ENCODE measurements at regions of chr3 and their contacts with region 1.

Region 1: GRCh38 chr3:128051837-128052594 is at the start of gene SEC61A1:
- DNase-seq: peak; percentile 95
- ATAC-seq: peak; percentile 95
- H3K4me3 ChIP-seq: peak within 1 kb of the TSS; percentile 82 to 97 (median 92)
- H3K4me3 Mint-ChIP-seq: peak within 1 kb of the TSS; percentile 95
- H3K27ac ChIP-seq: peak within 1 kb of the TSS; percentile 61 to 90
- H3K27ac Mint-ChIP-seq: peak within 1 kb of the TSS; percentile 92
- H3K4me1 ChIP-seq: peaks cover 31 to 32% of the 10 kb centered on the region in 2 donors
- H3K4me1 Mint-ChIP-seq: peaks cover 40% of the 10 kb centered on the region
- H3K27me3 ChIP-seq: no peaks in the 10 kb centered on the region
- H3K27me3 Mint-ChIP-seq: peaks cover 1% of the 10 kb centered on the region
- CTCF ChIP-seq: no peak
- total RNA-seq, gene SEC61A1: 68.9 and 79.4 TPM in 2 replicates

Region 2: GRCh38 chr3:126357295-126358037 is 1694.5 kb before region 1 on chr3 and contains the start of gene KLF15:
- CTCF ChIA-PET with region 1: no interaction called
- POLR2A ChIA-PET with region 1: no interaction called
- intact Hi-C with region 1: loop called (anchors 5 kb)
- DNase-seq: peak; percentile 85
- ATAC-seq: peak; percentile 93
- H3K4me3 ChIP-seq: peak within 1 kb of the TSS; percentile 12 to 84 (median 59)
- H3K4me3 Mint-ChIP-seq: peak within 1 kb of the TSS; percentile 95
- H3K27ac ChIP-seq: no peak within 1 kb of the TSS
- H3K27ac Mint-ChIP-seq: peak within 1 kb of the TSS; percentile 81
- H3K4me1 ChIP-seq: peaks cover 20 to 21% of the 10 kb centered on the region in 2 donors
- H3K4me1 Mint-ChIP-seq: peaks cover 16% of the 10 kb centered on the region
- H3K27me3 ChIP-seq: peaks cover 0 to 54% (median 22%) of the 10 kb centered on the region in 4 experiments
- H3K27me3 Mint-ChIP-seq: peaks cover 50% of the 10 kb centered on the region
- CTCF ChIP-seq: no peak
- total RNA-seq, gene KLF15: 0.83 and 2.2 TPM in 2 replicates

Region 3: DNA sequence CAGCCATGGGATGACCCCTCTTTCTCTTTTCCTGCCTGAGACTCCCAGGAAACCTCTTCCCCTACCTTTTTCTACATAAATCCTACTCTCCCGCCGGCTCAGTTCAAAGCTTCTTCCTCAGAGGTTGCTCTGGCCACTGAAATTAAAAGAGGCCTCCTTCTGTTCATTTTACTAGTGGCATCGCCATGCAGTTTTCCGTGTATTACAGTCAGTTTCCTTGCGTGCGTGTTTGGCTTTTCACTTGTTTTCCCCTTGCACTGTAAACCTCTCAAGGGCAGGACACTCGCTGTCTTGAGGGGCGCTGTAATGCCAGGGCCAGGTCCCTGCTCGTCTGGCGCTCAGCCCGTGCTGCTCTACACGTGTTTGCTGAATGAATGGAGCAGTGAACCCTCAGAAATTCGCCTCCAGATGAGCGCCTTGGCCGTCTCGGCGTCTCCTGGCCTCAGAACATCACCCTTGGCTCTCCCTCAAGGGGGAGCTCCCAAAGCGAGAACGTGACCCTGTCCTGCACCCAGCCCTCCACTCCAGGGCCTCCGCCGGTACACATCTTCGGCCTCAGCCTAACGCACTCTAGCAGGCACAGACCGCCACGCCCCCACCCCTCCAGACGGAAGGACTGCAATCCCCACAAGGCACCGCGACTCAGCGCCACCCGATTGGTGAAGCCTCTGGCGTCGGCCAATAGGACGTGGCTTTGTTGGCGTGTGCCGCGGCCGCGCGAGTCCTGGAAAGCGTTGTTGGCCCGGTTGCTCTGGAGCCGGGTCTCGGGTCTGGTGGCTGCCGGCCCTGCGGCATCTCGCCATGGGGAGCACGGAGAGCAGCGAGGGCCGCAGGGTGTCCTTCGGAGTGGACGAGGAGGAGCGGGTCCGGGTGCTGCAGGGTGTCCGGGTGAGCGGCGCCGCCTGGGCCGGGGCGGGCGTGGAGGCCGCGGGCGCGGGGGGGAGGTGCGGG is 1348.2 kb before region 1 on chr3 and contains the start of gene CHCHD6:
- CTCF ChIA-PET with region 1: no interaction called
- POLR2A ChIA-PET with region 1: no interaction called
- intact Hi-C with region 1: loop called (anchors 2 kb)
- DNase-seq: peak; percentile 97
- ATAC-seq: peak; percentile 96
- H3K4me3 ChIP-seq: peak within 1 kb of the TSS in 4 of 5 experiments; percentile 61 to 79 (median 75)
- H3K4me3 Mint-ChIP-seq: peak within 1 kb of the TSS; percentile 92
- H3K27ac ChIP-seq: peak within 1 kb of the TSS in 1 of 2 donors; percentile 11
- H3K27ac Mint-ChIP-seq: peak within 1 kb of the TSS; percentile 78
- H3K4me1 ChIP-seq: peaks cover 11 to 15% of the 10 kb centered on the region in 2 donors
- H3K4me1 Mint-ChIP-seq: peaks cover 17% of the 10 kb centered on the region
- H3K27me3 ChIP-seq: peaks cover 0 to 9% (median 4%) of the 10 kb centered on the region in 4 experiments
- H3K27me3 Mint-ChIP-seq: peaks cover 36% of the 10 kb centered on the region
- CTCF ChIP-seq: no peak
- total RNA-seq, gene CHCHD6: 13.5 TPM in 2 replicates

Region 4: DNA sequence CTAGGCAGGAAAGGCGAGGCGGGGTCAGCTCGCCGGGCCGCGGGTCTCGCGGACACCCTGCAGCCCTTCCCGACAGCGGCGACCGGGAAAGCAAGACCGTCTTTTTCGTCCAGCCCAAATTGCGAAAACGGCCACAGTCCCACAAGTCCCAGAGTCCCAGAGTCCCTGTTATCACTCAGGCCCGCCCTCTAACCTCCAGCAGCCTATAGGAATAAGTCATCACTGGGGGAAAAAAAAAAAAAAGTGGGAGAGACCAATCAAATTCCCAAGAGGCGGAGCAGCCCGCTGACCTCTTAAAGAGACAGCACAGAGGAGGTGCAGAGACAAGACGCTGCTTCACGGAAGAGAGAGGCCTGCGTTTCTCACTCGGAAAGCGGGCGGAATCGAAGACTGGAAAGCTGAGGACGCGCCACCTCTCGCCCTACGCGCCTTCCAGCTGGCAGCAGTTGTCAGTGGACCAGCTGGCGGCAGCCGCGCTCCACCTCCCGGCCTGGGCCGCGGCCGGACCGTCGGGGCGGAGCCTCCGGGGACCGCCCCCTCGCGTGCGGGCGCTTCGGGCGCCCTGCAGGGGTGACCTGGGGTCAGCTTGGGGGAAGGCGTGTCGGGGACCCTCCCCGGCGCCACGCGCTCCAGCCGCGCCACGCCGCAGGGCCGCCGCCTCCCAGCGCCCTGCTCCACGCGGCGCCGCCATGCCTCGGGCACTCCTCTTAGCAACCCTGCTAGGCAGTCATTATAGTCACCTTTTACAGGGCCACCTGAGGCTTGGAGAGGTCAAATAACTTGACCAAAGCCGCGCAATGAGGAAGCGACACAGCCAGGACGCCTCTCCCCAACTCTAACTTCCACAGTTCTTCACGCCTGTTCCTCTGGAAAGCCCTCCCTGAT is 461.2 kb before region 1 on chr3 and contains the start of gene TPRA1:
- CTCF ChIA-PET with region 1: no interaction called
- POLR2A ChIA-PET with region 1: no interaction called
- intact Hi-C with region 1: loop called (anchors 2 kb)
- DNase-seq: peak; percentile 92
- ATAC-seq: peak; percentile 82
- H3K4me3 ChIP-seq: peak within 1 kb of the TSS; percentile 56 to 87 (median 76)
- H3K4me3 Mint-ChIP-seq: peak within 1 kb of the TSS; percentile 96
- H3K27ac ChIP-seq: peak within 1 kb of the TSS; percentile 15 to 69
- H3K27ac Mint-ChIP-seq: peak within 1 kb of the TSS; percentile 94
- H3K4me1 ChIP-seq: peaks cover 16 to 23% of the 10 kb centered on the region in 2 donors
- H3K4me1 Mint-ChIP-seq: peaks cover 31% of the 10 kb centered on the region
- H3K27me3 ChIP-seq: no peaks in the 10 kb centered on the region
- H3K27me3 Mint-ChIP-seq: no peaks in the 10 kb centered on the region
- CTCF ChIP-seq: no peak
- total RNA-seq, gene TPRA1: 19.8 and 25.2 TPM in 2 replicates

Region 5: GRCh38 chr3:128021759-128022372 is 30.1 kb before region 1 on chr3:
- CTCF ChIA-PET with region 1: no interaction called
- POLR2A ChIA-PET with region 1: no interaction called
- intact Hi-C with region 1: no loop called
- DNase-seq: no peak
- ATAC-seq: no peak
- H3K4me3 ChIP-seq: no peak overlapping the region
- H3K4me3 Mint-ChIP-seq: no peak overlapping the region
- H3K27ac ChIP-seq: no peak overlapping the region
- H3K27ac Mint-ChIP-seq: no peak overlapping the region
- H3K4me1 ChIP-seq: no peaks in the 10 kb centered on the region
- H3K4me1 Mint-ChIP-seq: no peaks in the 10 kb centered on the region
- H3K27me3 ChIP-seq: no peaks in the 10 kb centered on the region
- H3K27me3 Mint-ChIP-seq: peaks cover 18% of the 10 kb centered on the region
- CTCF ChIP-seq: no peak

Region 6: GRCh38 chr3:128075516-128076482 is 23.8 kb after region 1 on chr3:
- CTCF ChIA-PET with region 1: interaction called, 6 read pairs
- POLR2A ChIA-PET with region 1: no interaction called
- intact Hi-C with region 1: loop called (anchors 1 kb)
- DNase-seq: peak; percentile 91
- ATAC-seq: peak; percentile 88
- H3K4me3 ChIP-seq: peak overlapping the region; percentile 38 to 65 (median 60)
- H3K4me3 Mint-ChIP-seq: peak overlapping the region; percentile 85
- H3K27ac ChIP-seq: peak overlapping the region in 1 of 2 donors; percentile 28
- H3K27ac Mint-ChIP-seq: no peak overlapping the region
- H3K4me1 ChIP-seq: peaks cover 17 to 26% of the 10 kb centered on the region in 2 donors
- H3K4me1 Mint-ChIP-seq: peaks cover 17% of the 10 kb centered on the region
- H3K27me3 ChIP-seq: peaks cover 0 to 8% (median 1%) of the 10 kb centered on the region in 4 experiments
- H3K27me3 Mint-ChIP-seq: no peaks in the 10 kb centered on the region
- CTCF ChIP-seq: peak; percentile 97

Region 7: GRCh38 chr3:128725932-128726690 is 674.1 kb after region 1 on chr3 and contains the start of gene RAB7A:
- CTCF ChIA-PET with region 1: no interaction called
- POLR2A ChIA-PET with region 1: no interaction called
- intact Hi-C with region 1: loop called (anchors 5 kb)
- DNase-seq: peak; percentile 99
- ATAC-seq: peak; percentile 96
- H3K4me3 ChIP-seq: peak within 1 kb of the TSS; percentile 79 to 98 (median 93)
- H3K4me3 Mint-ChIP-seq: peak within 1 kb of the TSS; percentile 99
- H3K27ac ChIP-seq: peak within 1 kb of the TSS; percentile 92 to 99
- H3K27ac Mint-ChIP-seq: peak within 1 kb of the TSS; percentile 100
- H3K4me1 ChIP-seq: peaks cover 45 to 46% of the 10 kb centered on the region in 2 donors
- H3K4me1 Mint-ChIP-seq: peaks cover 52% of the 10 kb centered on the region
- H3K27me3 ChIP-seq: no peaks in the 10 kb centered on the region
- H3K27me3 Mint-ChIP-seq: peaks cover 7% of the 10 kb centered on the region
- CTCF ChIP-seq: no peak
- total RNA-seq, gene RAB7A: 138 and 144 TPM in 2 replicates

Region 8: GRCh38 chr3:129690406-129690805 is 1638.4 kb after region 1 on chr3:
- CTCF ChIA-PET with region 1: no interaction called
- POLR2A ChIA-PET with region 1: no interaction called
- intact Hi-C with region 1: loop called (anchors 5 kb)
- DNase-seq: peak; percentile 81
- ATAC-seq: peak; percentile 98
- H3K4me3 ChIP-seq: no peak overlapping the region
- H3K4me3 Mint-ChIP-seq: no peak overlapping the region
- H3K27ac ChIP-seq: peak overlapping the region in 1 of 2 donors; percentile 45
- H3K27ac Mint-ChIP-seq: peak overlapping the region; percentile 75
- H3K4me1 ChIP-seq: peaks cover 3 to 4% of the 10 kb centered on the region in 2 donors
- H3K4me1 Mint-ChIP-seq: peaks cover 6% of the 10 kb centered on the region
- H3K27me3 ChIP-seq: no peaks in the 10 kb centered on the region
- H3K27me3 Mint-ChIP-seq: no peaks in the 10 kb centered on the region
- CTCF ChIP-seq: no peak

Measured in B cell (primary cell).